Mammary epithelial cell (primary cell): ENCODE measurements at regions of chr15 and their contacts with region 1.

Region 1: GRCh38 chr15:63381301-63382204 is at the start of gene CA12:
- DNase-seq: peak; percentile 56
- H3K4me3 ChIP-seq: peak within 1 kb of the TSS; percentile 73 to 83 (median 81)
- H3K27ac ChIP-seq: peak within 1 kb of the TSS; percentile 77
- H3K4me1 ChIP-seq: peaks cover 63% of the 10 kb centered on the region
- H3K27me3 ChIP-seq: no peaks in the 10 kb centered on the region
- CTCF ChIP-seq: no peak
- total RNA-seq, gene CA12: 174 to 202 TPM

Region 2: GRCh38 chr15:63288778-63289378 is 92.7 kb before region 1 on chr15:
- CTCF ChIA-PET with region 1: interaction called, 10 read pairs
- dilution Hi-C with region 1: no loop called
- in situ Hi-C with region 1: no loop called
- intact Hi-C with region 1: no loop called
- DNase-seq: peak; percentile 36
- H3K4me3 ChIP-seq: no peak overlapping the region
- H3K27ac ChIP-seq: no peak overlapping the region
- H3K4me1 ChIP-seq: peaks cover 6% of the 10 kb centered on the region
- H3K27me3 ChIP-seq: no peaks in the 10 kb centered on the region
- CTCF ChIP-seq: peak; percentile 59 to 72

Region 3: DNA sequence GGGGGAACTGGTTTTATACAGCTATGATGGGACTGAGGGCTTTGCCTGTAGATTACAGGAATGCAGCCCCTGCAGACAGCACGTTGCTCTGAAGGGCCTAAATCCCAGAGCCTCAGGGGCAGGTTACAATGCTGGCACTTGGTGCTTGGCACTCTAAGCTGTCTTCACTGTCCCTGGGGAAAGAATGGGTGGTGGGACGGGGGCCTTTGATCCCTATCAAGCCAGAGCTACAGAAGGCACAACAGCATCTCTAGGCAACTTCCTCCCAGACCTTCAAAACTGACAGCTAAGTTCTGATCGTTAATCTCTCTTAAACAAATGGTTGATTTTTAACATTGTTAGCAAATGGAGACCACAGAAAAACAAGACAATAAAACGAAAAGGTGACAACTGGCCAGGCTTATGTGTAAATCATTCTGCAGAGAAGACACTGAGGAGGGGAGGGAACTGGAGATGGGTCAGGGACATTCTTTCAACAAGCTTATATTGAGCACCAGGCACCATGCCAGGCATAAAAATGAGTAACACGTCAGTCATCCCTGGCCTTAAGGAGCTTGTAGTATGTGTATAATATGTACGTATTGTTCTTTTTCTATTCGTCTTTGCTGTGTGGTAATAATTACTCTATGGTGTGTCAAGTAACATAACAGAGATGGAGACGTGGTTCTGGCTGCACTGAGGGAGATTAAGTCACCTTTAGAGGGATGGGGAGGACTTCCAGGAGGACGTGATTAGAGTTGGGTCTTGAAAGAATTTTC is 49.0 kb before region 1 on chr15:
- CTCF ChIA-PET with region 1: no interaction called
- dilution Hi-C with region 1: loop called (anchors 5 kb)
- in situ Hi-C with region 1: loop called in 1 of 2 experiments (anchors 10 kb)
- intact Hi-C with region 1: loop called (anchors 2 kb)
- DNase-seq: peak; percentile 94
- H3K4me3 ChIP-seq: no peak overlapping the region
- H3K27ac ChIP-seq: peak overlapping the region; percentile 9
- H3K4me1 ChIP-seq: peaks cover 34% of the 10 kb centered on the region
- H3K27me3 ChIP-seq: no peaks in the 10 kb centered on the region
- CTCF ChIP-seq: no peak

Region 4: DNA sequence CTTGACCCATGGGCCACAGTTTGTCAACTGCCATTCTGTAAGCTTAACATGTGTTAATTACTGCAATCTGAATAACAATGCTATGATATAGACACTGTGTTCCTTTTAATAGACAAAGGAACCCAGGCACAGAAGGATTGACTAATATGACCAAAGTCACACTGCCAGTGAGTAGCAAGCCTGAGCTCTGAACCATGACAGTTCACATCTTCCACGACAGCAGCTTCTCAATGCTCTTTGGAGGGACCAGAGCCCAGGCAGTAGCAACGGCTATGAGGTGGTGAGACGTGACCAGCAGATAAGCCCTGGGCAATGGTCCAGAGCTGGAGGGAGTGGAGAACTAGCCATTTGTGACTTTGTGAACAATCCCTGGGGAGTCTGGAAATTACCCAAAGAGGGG is 19.4 kb before region 1 on chr15:
- CTCF ChIA-PET with region 1: no interaction called
- dilution Hi-C with region 1: no loop called
- in situ Hi-C with region 1: no loop called
- intact Hi-C with region 1: no loop called
- DNase-seq: no peak
- H3K4me3 ChIP-seq: no peak overlapping the region
- H3K27ac ChIP-seq: no peak overlapping the region
- H3K4me1 ChIP-seq: no peaks in the 10 kb centered on the region
- H3K27me3 ChIP-seq: no peaks in the 10 kb centered on the region
- CTCF ChIP-seq: no peak

Region 5: GRCh38 chr15:63491116-63491827 is 109.7 kb after region 1 on chr15:
- CTCF ChIA-PET with region 1: no interaction called
- dilution Hi-C with region 1: no loop called
- in situ Hi-C with region 1: no loop called
- intact Hi-C with region 1: no loop called
- DNase-seq: no peak
- H3K4me3 ChIP-seq: no peak overlapping the region
- H3K27ac ChIP-seq: no peak overlapping the region
- H3K4me1 ChIP-seq: no peaks in the 10 kb centered on the region
- H3K27me3 ChIP-seq: no peaks in the 10 kb centered on the region
- CTCF ChIP-seq: no peak